Mammary epithelial cell (primary cell): ENCODE measurements at regions of chr2 and their contacts with region 1.

Region 1: GRCh38 chr2:53202063-53202462 is 565.5 kb upstream of the CHAC2 start:
- DNase-seq: peak; percentile 91
- H3K4me3 ChIP-seq: no peak overlapping the region
- H3K27ac ChIP-seq: no peak overlapping the region
- H3K4me1 ChIP-seq: peaks cover 4% of the 10 kb centered on the region
- H3K27me3 ChIP-seq: no peaks in the 10 kb centered on the region
- CTCF ChIP-seq: peak; percentile 43 to 63

Region 2: GRCh38 chr2:52976253-52976949 is 225.7 kb before region 1 on chr2:
- CTCF ChIA-PET with region 1: no interaction called
- dilution Hi-C with region 1: no loop called
- in situ Hi-C with region 1: no loop called
- intact Hi-C with region 1: loop called (anchors 2 kb)
- DNase-seq: peak; percentile 40
- H3K4me3 ChIP-seq: no peak overlapping the region
- H3K27ac ChIP-seq: no peak overlapping the region
- H3K4me1 ChIP-seq: no peaks in the 10 kb centered on the region
- H3K27me3 ChIP-seq: no peaks in the 10 kb centered on the region
- CTCF ChIP-seq: peak; percentile 75 to 86

Region 3: GRCh38 chr2:53018825-53019425 is 183.1 kb before region 1 on chr2:
- CTCF ChIA-PET with region 1: interaction called, 6 read pairs
- dilution Hi-C with region 1: no loop called
- in situ Hi-C with region 1: no loop called
- intact Hi-C with region 1: loop called (anchors 2 kb)
- DNase-seq: no peak
- H3K4me3 ChIP-seq: no peak overlapping the region
- H3K27ac ChIP-seq: no peak overlapping the region
- H3K4me1 ChIP-seq: no peaks in the 10 kb centered on the region
- H3K27me3 ChIP-seq: no peaks in the 10 kb centered on the region
- CTCF ChIP-seq: peak; percentile 6 to 23

Region 4: GRCh38 chr2:53445386-53446072 is 243.5 kb after region 1 on chr2:
- CTCF ChIA-PET with region 1: no interaction called
- dilution Hi-C with region 1: no loop called
- in situ Hi-C with region 1: no loop called
- intact Hi-C with region 1: loop called (anchors 2 kb)
- DNase-seq: peak; percentile 55
- H3K4me3 ChIP-seq: no peak overlapping the region
- H3K27ac ChIP-seq: no peak overlapping the region
- H3K4me1 ChIP-seq: peaks cover 6% of the 10 kb centered on the region
- H3K27me3 ChIP-seq: no peaks in the 10 kb centered on the region
- CTCF ChIP-seq: no peak

Region 5: GRCh38 chr2:53715568-53715967 is 513.5 kb after region 1 on chr2:
- CTCF ChIA-PET with region 1: no interaction called
- dilution Hi-C with region 1: no loop called
- in situ Hi-C with region 1: no loop called
- intact Hi-C with region 1: loop called (anchors 1 kb)
- DNase-seq: no peak
- H3K4me3 ChIP-seq: no peak overlapping the region
- H3K27ac ChIP-seq: no peak overlapping the region
- H3K4me1 ChIP-seq: no peaks in the 10 kb centered on the region
- H3K27me3 ChIP-seq: no peaks in the 10 kb centered on the region
- CTCF ChIP-seq: peak; percentile 50 to 63